ENCODE measurements at regions of chr10 and their contacts with region 1.

Region 1: GRCh38 chr10:58177362-58177947 is 90.2 kb downstream of the IPMK start:
- DNase-seq: no peak
- H3K4me3 Mint-ChIP-seq: no peak overlapping the region
- H3K27ac Mint-ChIP-seq: no peak overlapping the region
- H3K4me1 Mint-ChIP-seq: no peaks in the 10 kb centered on the region
- H3K27me3 Mint-ChIP-seq: no peaks in the 10 kb centered on the region

Region 2: GRCh38 chr10:58189269-58189668 is 11.8 kb after region 1 on chr10:
- CTCF ChIA-PET with region 1: interaction called, 10 read pairs
- POLR2A ChIA-PET with region 1: no interaction called
- intact Hi-C with region 1: no loop called
- DNase-seq: no peak
- H3K4me3 Mint-ChIP-seq: no peak overlapping the region
- H3K27ac Mint-ChIP-seq: no peak overlapping the region
- H3K4me1 Mint-ChIP-seq: no peaks in the 10 kb centered on the region
- H3K27me3 Mint-ChIP-seq: peaks cover 8% of the 10 kb centered on the region

Region 3: DNA sequence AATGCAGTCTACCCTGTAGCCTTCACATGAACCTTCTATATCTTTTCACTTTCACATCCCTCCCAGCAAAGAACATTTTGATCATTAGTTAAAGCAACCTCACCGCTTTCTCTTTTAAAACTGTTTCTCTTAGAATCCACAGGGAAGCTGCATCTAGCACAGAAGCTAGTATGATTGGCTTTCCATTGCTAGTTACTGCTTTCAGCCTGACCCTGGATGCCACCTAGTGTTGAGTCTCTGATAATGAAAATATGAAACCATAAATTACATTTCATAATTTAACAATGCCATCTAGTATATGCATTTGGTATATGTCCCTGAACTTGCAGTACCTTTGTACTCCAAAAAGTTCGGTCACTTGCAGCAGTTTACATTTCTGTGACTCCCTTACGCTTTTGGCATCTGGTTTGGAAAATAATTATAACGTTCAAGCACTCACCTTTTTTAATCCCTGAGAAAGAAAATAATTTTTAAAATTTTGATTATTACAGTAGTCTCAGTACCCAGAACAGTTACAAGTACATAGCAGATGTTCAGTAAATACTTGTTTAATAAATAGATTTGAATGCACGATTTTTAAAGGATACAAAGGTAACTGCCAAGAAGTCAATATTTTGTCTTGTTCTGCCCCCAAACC is 114.2 kb after region 1 on chr10:
- CTCF ChIA-PET with region 1: interaction called, 167 read pairs
- POLR2A ChIA-PET with region 1: no interaction called
- intact Hi-C with region 1: loop called (anchors 1 kb)
- DNase-seq: peak; percentile 31
- H3K4me3 Mint-ChIP-seq: no peak overlapping the region
- H3K27ac Mint-ChIP-seq: no peak overlapping the region
- H3K4me1 Mint-ChIP-seq: no peaks in the 10 kb centered on the region
- H3K27me3 Mint-ChIP-seq: no peaks in the 10 kb centered on the region

Region 4: GRCh38 chr10:58299580-58299979 is 122.1 kb after region 1 on chr10:
- CTCF ChIA-PET with region 1: interaction called, 18 read pairs
- POLR2A ChIA-PET with region 1: no interaction called
- intact Hi-C with region 1: no loop called
- DNase-seq: peak; percentile 70
- H3K4me3 Mint-ChIP-seq: no peak overlapping the region
- H3K27ac Mint-ChIP-seq: no peak overlapping the region
- H3K4me1 Mint-ChIP-seq: peaks cover 2% of the 10 kb centered on the region
- H3K27me3 Mint-ChIP-seq: peaks cover 2% of the 10 kb centered on the region

Region 5: GRCh38 chr10:58384999-58385783 is 207.7 kb after region 1 on chr10 and contains the start of gene TFAM:
- CTCF ChIA-PET with region 1: interaction called, 6 read pairs
- POLR2A ChIA-PET with region 1: no interaction called
- intact Hi-C with region 1: loop called (anchors 2 kb)
- DNase-seq: peak; percentile 99
- H3K4me3 Mint-ChIP-seq: peak within 1 kb of the TSS; percentile 99
- H3K27ac Mint-ChIP-seq: peak within 1 kb of the TSS; percentile 92
- H3K4me1 Mint-ChIP-seq: peaks cover 37% of the 10 kb centered on the region
- H3K27me3 Mint-ChIP-seq: no peaks in the 10 kb centered on the region
- total RNA-seq, gene TFAM: 85.4 to 92.5 TPM

Region 6: DNA sequence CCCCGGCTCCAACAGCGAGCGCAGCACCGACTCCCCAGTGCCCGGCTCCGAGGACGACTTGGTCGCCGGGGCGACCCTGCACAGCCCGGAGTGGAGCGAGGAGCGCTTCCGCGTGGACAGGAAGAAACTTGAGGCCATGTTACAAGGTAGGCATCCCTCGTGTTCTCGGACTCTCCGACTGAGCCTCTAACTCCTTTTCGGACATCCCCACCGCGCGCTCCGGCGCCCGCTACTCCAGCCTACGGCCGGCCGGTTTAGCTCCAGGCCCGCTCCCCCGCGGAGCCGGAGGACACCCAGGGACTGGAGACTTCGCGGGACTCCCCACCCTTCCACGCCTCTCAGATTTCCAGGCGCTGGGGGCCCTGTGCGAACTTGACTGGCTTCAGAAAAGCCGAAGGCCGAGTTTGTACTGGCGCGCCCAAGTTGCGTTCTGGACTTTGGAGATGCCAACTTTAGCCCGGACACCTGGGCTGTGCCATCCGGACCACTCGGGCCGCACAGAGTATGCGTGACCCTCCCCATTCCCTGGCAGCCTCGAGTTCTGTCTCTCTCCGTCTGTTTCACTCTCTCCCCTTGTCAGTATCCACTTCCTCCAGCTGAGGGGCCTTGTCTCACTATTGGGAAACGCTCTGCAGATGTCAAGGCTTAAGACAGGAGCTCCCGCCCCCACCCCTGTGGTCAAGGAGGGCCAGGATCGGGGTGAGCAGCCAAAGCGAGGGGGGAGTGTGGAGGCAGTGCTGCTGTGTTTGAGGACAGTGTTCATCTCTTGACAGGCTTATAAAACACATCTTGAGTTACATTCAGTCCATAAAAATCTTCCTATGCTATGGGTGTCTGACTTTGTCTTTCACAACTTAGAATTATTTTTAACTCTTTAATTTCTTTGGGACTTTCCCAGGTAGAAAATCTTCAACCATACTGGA is 336.0 kb after region 1 on chr10:
- CTCF ChIA-PET with region 1: no interaction called
- POLR2A ChIA-PET with region 1: no interaction called
- intact Hi-C with region 1: loop called (anchors 10 kb)
- DNase-seq: peak; percentile 9
- H3K4me3 Mint-ChIP-seq: peak overlapping the region; percentile 64
- H3K27ac Mint-ChIP-seq: no peak overlapping the region
- H3K4me1 Mint-ChIP-seq: peaks cover 15% of the 10 kb centered on the region
- H3K27me3 Mint-ChIP-seq: peaks cover 38% of the 10 kb centered on the region

Measured in activated CD4-positive, alpha-beta memory T cell treated with anti-CD3 and anti-CD28 coated beads for 36 hours (primary cell).